Activated CD4-positive, alpha-beta T cell treated with anti-CD3 and anti-CD28 coated beads, Interleukin-2, amount 10 ng/mL, durations not matched to agents 24 days and 14 days (primary cell): ENCODE measurements at regions of chr16 and their contacts with region 1.

Region 1: GRCh38 chr16:22001591-22001990 is 675 bp upstream of the PDZD9 start:
- DNase-seq: no peak
- H3K4me3 Mint-ChIP-seq: no peak overlapping the region
- H3K27ac Mint-ChIP-seq: no peak overlapping the region
- H3K4me1 Mint-ChIP-seq: peaks cover 7% of the 10 kb centered on the region
- H3K27me3 Mint-ChIP-seq: peaks cover 2% of the 10 kb centered on the region

Region 2: GRCh38 chr16:21952793-21953540 is 48.6 kb before region 1 on chr16 and contains the start of gene UQCRC2:
- intact Hi-C with region 1: no loop called
- DNase-seq: peak; percentile 96
- H3K4me3 Mint-ChIP-seq: peak within 1 kb of the TSS; percentile 98
- H3K27ac Mint-ChIP-seq: peak within 1 kb of the TSS; percentile 97
- H3K4me1 Mint-ChIP-seq: peaks cover 32% of the 10 kb centered on the region
- H3K27me3 Mint-ChIP-seq: no peaks in the 10 kb centered on the region
- total RNA-seq, gene UQCRC2: 256 and 266 TPM in 2 replicates

Region 3: DNA sequence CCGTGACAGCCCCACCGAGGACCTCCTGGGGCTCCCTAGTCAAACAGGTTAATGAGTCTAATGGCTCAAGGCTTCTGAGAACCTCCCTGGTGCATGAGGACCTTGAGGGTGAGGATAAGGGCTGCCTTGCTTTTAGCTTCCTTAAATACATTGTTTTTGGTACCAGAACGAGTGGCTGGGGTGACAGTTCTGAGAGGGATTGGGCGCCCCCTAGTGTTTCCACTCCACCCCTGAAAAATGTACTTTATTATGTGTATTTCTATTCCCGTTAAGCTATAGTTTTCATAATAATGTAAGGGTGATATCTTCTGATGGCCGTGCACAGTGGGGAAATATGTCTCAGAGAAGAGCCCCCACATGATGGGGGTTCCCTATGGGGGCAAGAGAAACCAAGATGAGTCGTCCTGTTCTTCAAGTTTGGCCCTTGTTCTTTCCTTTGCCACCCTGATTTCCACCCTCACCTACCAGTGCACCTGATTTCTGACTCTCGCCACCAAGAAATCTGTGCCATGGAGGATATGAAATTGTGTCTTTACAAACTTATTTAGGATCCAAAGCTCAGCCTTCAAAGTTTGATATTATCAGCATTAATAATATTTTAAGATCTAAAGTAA is 76.2 kb after region 1 on chr16:
- intact Hi-C with region 1: loop called (anchors 1 kb)
- DNase-seq: peak; percentile 91
- H3K4me3 Mint-ChIP-seq: no peak overlapping the region
- H3K27ac Mint-ChIP-seq: no peak overlapping the region
- H3K4me1 Mint-ChIP-seq: no peaks in the 10 kb centered on the region
- H3K27me3 Mint-ChIP-seq: no peaks in the 10 kb centered on the region

Region 4: DNA sequence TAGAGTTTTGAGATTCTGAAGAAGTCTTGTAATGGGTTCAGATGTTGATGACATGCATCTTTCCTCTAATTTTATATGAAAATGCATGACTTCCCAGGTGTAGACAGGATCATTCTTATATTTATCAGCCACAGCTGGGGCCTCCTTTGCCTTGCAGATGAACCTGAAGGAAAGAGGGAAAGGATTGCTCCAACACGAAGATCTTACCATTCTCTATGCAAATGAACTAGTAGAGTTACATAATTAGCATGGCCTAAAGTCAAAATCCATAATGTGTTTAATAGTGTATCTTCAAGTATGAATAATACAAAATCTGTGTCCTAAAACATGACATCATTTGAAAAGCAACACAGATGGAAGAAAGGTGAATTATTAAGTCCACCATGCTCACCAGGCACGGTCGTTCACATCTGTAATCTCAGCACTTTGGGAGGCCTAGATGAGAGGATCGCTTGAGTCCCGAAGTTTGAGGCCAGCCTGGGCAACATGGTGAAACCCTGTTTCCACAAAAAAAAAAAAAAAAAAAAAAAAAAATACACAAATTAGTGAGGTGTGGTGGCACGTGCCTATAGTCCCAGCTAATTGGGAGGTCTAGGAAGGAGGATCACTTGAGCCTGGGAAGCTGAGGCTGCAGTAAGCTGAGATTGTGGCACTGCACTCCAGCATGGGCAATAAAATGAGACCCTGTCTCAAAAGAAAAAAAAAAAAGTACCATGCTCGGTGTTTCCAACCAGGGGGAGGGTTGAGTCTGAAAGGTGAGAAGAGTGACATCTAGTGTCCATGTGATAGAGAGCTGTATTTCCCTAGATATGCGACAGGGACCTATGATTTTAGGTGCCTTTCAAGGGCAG is 97.0 kb after region 1 on chr16:
- intact Hi-C with region 1: loop called (anchors 1 kb)
- DNase-seq: peak; percentile 71
- H3K4me3 Mint-ChIP-seq: no peak overlapping the region
- H3K27ac Mint-ChIP-seq: no peak overlapping the region
- H3K4me1 Mint-ChIP-seq: no peaks in the 10 kb centered on the region
- H3K27me3 Mint-ChIP-seq: peaks cover 10% of the 10 kb centered on the region

Region 5: DNA sequence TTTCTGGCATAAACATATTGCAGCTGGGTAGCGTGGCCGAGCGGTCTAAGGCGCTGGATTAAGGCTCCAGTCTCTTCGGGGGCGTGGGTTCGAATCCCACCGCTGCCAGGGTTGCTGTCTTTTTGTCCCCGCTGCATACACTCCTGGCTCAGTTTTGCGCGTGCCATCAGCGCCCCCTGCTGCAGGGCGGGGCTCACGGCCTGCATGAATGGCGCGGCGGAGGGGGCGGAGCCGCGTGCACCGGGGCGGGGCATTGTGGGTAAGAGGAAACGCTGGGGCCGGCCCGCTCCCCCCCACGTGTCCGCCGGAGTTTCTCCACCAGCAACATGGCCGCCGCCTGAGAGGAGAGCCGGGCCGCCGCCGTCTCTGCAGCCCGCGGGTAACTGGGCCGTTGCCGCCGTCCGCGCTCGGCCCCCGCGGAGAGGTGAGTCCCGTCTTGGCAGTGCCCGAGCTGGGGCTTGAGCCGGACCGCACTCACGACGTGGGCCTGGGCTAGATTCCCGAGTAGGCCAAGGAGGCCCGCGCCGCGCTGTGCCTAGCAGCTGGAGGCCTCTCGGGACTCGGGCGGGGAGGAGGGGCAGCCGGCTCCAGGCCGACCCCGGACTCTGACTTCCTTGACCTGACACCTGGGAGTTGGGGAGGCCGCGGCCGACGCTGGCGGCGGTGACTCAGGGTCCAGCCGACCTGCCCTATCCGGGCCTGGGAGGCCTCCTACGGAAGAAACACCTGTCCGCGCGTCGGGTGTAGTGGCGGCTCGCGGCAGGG is 295.7 kb after region 1 on chr16 and contains the start of gene POLR3E:
- intact Hi-C with region 1: loop called (anchors 1 kb)
- DNase-seq: peak; percentile 100
- H3K4me3 Mint-ChIP-seq: peak within 1 kb of the TSS; percentile 94
- H3K27ac Mint-ChIP-seq: peak within 1 kb of the TSS; percentile 97
- H3K4me1 Mint-ChIP-seq: peaks cover 33% of the 10 kb centered on the region
- H3K27me3 Mint-ChIP-seq: no peaks in the 10 kb centered on the region
- total RNA-seq, gene POLR3E: 102 and 111 TPM in 2 replicates